ENCODE measurements at regions of chr16 and their contacts with region 1.

Region 1: DNA sequence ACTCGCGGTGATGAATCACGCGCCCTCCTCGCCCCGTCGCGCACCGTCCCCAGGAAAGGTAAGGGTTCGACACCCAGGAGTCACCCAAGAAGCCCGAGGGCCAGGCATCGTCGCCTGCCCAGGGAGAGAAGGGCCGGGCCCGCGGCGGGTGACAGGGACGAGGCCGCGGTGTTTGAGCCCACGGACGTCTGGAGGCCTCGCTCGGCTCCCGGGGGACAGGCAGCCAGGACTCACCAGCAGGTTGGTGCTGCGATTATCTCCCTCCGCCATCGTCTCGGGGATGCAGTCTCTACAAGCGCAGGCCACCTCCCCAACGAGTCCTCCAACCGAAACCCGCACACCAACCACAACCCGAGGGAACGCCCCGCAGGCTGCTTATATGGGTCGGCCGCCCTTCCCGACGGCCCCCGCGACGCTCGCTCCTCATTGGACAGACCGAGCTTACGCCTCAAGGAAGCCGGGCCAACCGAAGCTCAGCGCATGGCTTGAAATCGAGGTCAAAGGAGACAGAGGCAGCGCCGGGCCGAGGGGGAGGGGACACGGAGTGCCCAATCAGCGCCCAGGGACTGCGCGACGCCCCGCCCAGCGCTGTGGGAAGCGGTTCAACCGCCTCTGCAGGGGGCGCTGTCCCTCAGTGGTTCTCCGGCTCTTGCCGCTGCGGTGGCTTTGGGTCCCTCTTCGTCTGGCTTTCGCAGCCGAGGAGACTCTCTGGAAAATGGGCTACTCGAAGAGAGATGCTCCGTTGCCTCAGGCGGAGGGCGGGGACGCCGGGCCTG is at the start of gene ARL6IP1:
- DNase-seq: peak; percentile 98 to 100 (median 99)
- ATAC-seq: peak; percentile 96
- H3K4me3 ChIP-seq: peak within 1 kb of the TSS; percentile 94
- H3K4me3 Mint-ChIP-seq: peak within 1 kb of the TSS; percentile 88 to 99 (median 96)
- H3K27ac ChIP-seq: peak within 1 kb of the TSS; percentile 86
- H3K27ac Mint-ChIP-seq: peak within 1 kb of the TSS; percentile 88 to 97 (median 95)
- H3K4me1 ChIP-seq: peaks cover 21 to 29% of the 10 kb centered on the region in 2 donors
- H3K4me1 Mint-ChIP-seq: peaks cover 30 to 70% (median 58%) of the 10 kb centered on the region in 7 donors
- H3K27me3 ChIP-seq: no peaks in the 10 kb centered on the region
- H3K27me3 Mint-ChIP-seq: peaks cover 0 to 2% (median 0%) of the 10 kb centered on the region in 5 donors
- total RNA-seq, gene ARL6IP1: 82.9 to 208 (median 94.4) TPM

Region 2: GRCh38 chr16:18789850-18790724 is 11.3 kb before region 1 on chr16 and contains the start of gene RPS15A:
- CTCF ChIA-PET with region 1: interaction called, 9 read pairs
- POLR2A ChIA-PET with region 1: interaction called, 130 read pairs
- intact Hi-C with region 1: loop called (anchors 1 kb)
- DNase-seq: peak; percentile 72 to 97 (median 91)
- ATAC-seq: peak; percentile 98
- H3K4me3 ChIP-seq: peak within 1 kb of the TSS; percentile 98
- H3K4me3 Mint-ChIP-seq: peak within 1 kb of the TSS; percentile 92 to 99 (median 96)
- H3K27ac ChIP-seq: peak within 1 kb of the TSS; percentile 91
- H3K27ac Mint-ChIP-seq: peak within 1 kb of the TSS; percentile 89 to 96 (median 94)
- H3K4me1 ChIP-seq: peaks cover 22 to 43% of the 10 kb centered on the region in 2 donors
- H3K4me1 Mint-ChIP-seq: peaks cover 35 to 63% (median 50%) of the 10 kb centered on the region in 7 donors
- H3K27me3 ChIP-seq: no peaks in the 10 kb centered on the region
- H3K27me3 Mint-ChIP-seq: peaks cover 0 to 2% (median 0%) of the 10 kb centered on the region in 5 donors
- total RNA-seq, gene RPS15A: 2,060 to 3,897 (median 3,815) TPM

Region 3: DNA sequence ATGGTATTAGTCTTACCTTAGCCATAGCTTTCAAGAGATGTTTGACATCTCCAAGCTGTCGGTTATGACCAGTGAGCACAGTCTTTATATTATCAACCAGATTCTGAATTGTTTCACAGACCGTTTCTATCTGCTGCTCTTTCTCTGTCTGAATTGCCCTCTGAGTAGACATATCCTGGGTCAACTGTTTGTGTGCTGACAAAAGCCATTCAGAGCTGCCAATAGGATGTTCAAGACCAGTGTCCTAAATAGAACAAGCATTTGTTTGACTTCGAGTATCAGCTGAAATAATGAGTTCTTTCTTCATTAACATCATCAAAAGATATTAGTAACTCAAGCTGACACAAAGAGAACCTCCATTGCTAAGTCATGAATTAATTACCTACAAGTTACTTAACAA is 14.9 kb after region 1 on chr16:
- CTCF ChIA-PET with region 1: interaction called, 4 read pairs
- POLR2A ChIA-PET with region 1: interaction called, 22 read pairs
- intact Hi-C with region 1: no loop called
- DNase-seq: no peak
- ATAC-seq: no peak
- H3K4me3 ChIP-seq: no peak overlapping the region
- H3K4me3 Mint-ChIP-seq: no peak overlapping the region
- H3K27ac ChIP-seq: no peak overlapping the region
- H3K27ac Mint-ChIP-seq: no peak overlapping the region
- H3K4me1 ChIP-seq: no peaks in the 10 kb centered on the region
- H3K4me1 Mint-ChIP-seq: peaks cover 0 to 17% (median 14%) of the 10 kb centered on the region in 7 donors
- H3K27me3 ChIP-seq: no peaks in the 10 kb centered on the region
- H3K27me3 Mint-ChIP-seq: no peaks in the 10 kb centered on the region

Region 4: DNA sequence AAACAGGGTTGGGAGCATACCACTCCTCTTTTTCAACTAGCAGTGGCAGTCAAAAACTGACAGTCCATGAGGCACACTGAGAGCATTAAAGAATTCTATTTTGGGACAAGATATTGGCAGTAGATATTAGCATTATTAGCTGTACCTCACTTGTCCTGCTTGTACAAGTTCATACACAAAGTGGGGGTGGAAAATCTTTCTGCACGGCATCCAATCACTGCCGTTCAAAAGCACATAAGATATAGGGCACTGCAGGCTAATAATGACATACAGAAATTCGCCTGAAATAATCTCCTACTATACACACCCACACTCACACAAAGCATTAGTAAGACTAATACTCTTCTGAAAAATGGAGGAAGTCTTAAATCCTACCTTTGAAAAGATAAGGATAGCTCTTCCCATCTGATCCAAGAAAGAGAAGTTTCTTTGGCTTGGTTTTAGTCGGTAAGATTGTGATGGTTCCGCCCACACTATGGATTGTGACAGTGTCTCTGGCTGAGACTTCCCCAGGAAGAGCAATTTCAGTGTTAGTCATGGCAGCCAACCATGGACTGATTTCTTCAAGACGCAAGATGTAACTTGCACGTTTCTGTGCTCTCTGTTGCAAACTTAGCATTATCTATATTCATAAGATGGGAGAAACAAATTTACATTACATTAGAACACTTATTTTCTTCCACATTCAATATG is 40.6 kb after region 1 on chr16:
- CTCF ChIA-PET with region 1: interaction called, 4 read pairs
- POLR2A ChIA-PET with region 1: interaction called, 8 read pairs
- intact Hi-C with region 1: loop called in 1 of 2 experiments (anchors 5 kb)
- DNase-seq: no peak
- ATAC-seq: no peak
- H3K4me3 ChIP-seq: no peak overlapping the region
- H3K4me3 Mint-ChIP-seq: no peak overlapping the region
- H3K27ac ChIP-seq: no peak overlapping the region
- H3K27ac Mint-ChIP-seq: peak overlapping the region in 4 of 9 donors; percentile 0 to 26 (median 12)
- H3K4me1 ChIP-seq: no peaks in the 10 kb centered on the region
- H3K4me1 Mint-ChIP-seq: peaks cover 0 to 5% (median 0%) of the 10 kb centered on the region in 7 donors
- H3K27me3 ChIP-seq: no peaks in the 10 kb centered on the region
- H3K27me3 Mint-ChIP-seq: no peaks in the 10 kb centered on the region

Region 5: GRCh38 chr16:18945233-18945632 is 143.8 kb after region 1 on chr16:
- CTCF ChIA-PET with region 1: interaction called, 5 read pairs
- POLR2A ChIA-PET with region 1: no interaction called
- intact Hi-C with region 1: loop called in 1 of 2 experiments (anchors 5 kb)
- DNase-seq: no peak
- ATAC-seq: no peak
- H3K4me3 ChIP-seq: no peak overlapping the region
- H3K4me3 Mint-ChIP-seq: peak overlapping the region in 9 of 10 donors; percentile 25 to 86 (median 71)
- H3K27ac ChIP-seq: no peak overlapping the region
- H3K27ac Mint-ChIP-seq: peak overlapping the region in 2 of 9 donors; percentile 15 to 74
- H3K4me1 ChIP-seq: peaks cover 0 to 4% of the 10 kb centered on the region in 2 donors
- H3K4me1 Mint-ChIP-seq: peaks cover 0 to 27% (median 6%) of the 10 kb centered on the region in 7 donors
- H3K27me3 ChIP-seq: no peaks in the 10 kb centered on the region
- H3K27me3 Mint-ChIP-seq: peaks cover 0 to 8% (median 0%) of the 10 kb centered on the region in 5 donors

Region 6: DNA sequence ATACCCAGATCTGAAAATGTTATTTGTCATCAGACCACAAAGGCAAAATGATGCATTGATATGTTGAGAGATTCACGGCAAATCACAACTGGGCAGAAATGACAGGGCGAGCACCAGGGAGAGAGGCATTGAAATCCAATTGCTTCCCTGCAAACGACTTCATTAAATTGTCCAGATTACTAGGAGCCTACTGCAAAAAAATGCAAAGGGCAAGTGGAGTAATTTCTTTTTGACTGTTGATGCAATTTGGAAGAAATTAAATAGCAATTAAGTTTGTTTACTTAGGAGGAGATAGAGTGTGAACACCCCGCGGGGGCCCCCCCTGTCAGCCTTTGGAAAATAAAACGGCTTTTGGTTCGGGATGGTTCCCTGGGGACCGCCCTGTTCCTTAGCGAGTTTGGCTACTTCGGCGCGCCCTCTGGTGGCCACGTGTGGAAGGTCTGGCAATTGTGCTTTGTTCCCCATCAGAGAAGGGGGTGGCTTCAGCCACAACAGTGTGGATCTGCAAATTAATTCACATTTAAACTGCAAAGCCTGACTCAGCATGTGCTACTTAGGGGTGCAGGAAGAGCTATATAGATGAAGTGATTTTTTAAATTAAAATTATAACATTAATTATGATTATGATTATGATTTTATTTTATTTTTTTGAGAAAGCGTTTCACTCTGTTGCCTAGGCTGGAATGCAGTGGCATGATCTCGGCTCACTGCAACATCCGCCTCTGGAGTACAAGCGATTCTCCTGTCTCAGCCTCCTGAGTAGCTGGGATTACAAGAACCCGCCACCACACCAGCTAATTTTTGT is 167.9 kb after region 1 on chr16:
- CTCF ChIA-PET with region 1: interaction called, 8 read pairs
- POLR2A ChIA-PET with region 1: no interaction called
- intact Hi-C with region 1: loop called (anchors 1 kb)
- DNase-seq: peak; percentile 42 to 82 (median 62)
- ATAC-seq: peak; percentile 93
- H3K4me3 ChIP-seq: peak overlapping the region; percentile 8
- H3K4me3 Mint-ChIP-seq: peak overlapping the region in 8 of 10 donors; percentile 17 to 58 (median 46)
- H3K27ac ChIP-seq: no peak overlapping the region
- H3K27ac Mint-ChIP-seq: no peak overlapping the region
- H3K4me1 ChIP-seq: no peaks in the 10 kb centered on the region
- H3K4me1 Mint-ChIP-seq: peaks cover 4 to 9% (median 7%) of the 10 kb centered on the region in 7 donors
- H3K27me3 ChIP-seq: no peaks in the 10 kb centered on the region
- H3K27me3 Mint-ChIP-seq: peaks cover 0 to 2% (median 0%) of the 10 kb centered on the region in 5 donors

Region 7: GRCh38 chr16:19014461-19014860 is 213.1 kb after region 1 on chr16:
- CTCF ChIA-PET with region 1: no interaction called
- POLR2A ChIA-PET with region 1: no interaction called
- intact Hi-C with region 1: no loop called
- DNase-seq: no peak
- ATAC-seq: no peak
- H3K4me3 ChIP-seq: no peak overlapping the region
- H3K4me3 Mint-ChIP-seq: no peak overlapping the region
- H3K27ac ChIP-seq: no peak overlapping the region
- H3K27ac Mint-ChIP-seq: no peak overlapping the region
- H3K4me1 ChIP-seq: no peaks in the 10 kb centered on the region
- H3K4me1 Mint-ChIP-seq: no peaks in the 10 kb centered on the region
- H3K27me3 ChIP-seq: no peaks in the 10 kb centered on the region
- H3K27me3 Mint-ChIP-seq: peaks cover 0 to 5% (median 0%) of the 10 kb centered on the region in 5 donors